Vagina (tissue), 2 donors: ENCODE measurements at regions of chr2 and their contacts with region 1.

Region 1: GRCh38 chr2:11129598-11130449 is 25.4 kb upstream of the SLC66A3 start:
- DNase-seq: no peak
- H3K4me3 ChIP-seq: peak overlapping the region; percentile 37 to 43
- H3K27ac ChIP-seq: no peak overlapping the region
- H3K4me1 ChIP-seq: peaks cover 35% of the 10 kb centered on the region
- H3K27me3 ChIP-seq: no peaks in the 10 kb centered on the region
- CTCF ChIP-seq: peak in 1 of 3 experiments; percentile 3
- POLR2A ChIP-seq: no peak

Region 2: GRCh38 chr2:11446733-11447248 is 317.0 kb after region 1 on chr2:
- intact Hi-C with region 1: loop called (anchors 1 kb)
- DNase-seq: no peak
- H3K4me3 ChIP-seq: no peak overlapping the region
- H3K27ac ChIP-seq: no peak overlapping the region
- H3K4me1 ChIP-seq: no peaks in the 10 kb centered on the region
- H3K27me3 ChIP-seq: no peaks in the 10 kb centered on the region
- CTCF ChIP-seq: peak; percentile 12 to 70 (median 52)
- POLR2A ChIP-seq: no peak

Region 3: DNA sequence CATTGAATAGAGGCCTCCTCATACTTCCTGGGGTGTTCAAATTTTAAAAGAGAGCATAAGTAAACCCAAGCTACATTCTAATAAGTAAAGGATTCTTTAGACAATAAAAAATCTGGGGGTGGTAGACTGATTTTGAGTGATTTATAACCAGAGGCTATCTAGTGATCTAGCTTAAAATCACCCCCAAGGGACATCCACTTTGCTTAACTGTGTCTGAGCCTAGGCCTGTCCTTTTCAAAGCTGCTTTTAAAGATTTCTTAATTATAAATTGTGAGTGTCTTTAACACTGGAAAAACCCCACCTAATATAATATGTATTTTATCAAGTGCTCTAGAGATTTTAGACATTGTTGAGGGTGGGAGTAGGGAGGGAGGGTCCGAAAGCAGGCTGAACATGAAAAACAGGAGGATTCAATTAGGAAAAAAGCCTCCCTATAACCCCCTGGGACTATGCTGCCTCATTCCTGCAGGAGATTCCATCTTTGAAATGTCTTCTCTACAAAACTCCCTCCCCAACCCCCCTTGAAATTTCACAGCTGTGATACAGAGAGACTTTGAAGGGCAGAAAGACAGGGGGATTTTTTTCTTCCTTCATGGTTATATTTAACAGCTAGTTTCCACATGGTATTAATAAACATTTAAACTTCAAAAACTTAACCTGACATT is 1644.4 kb after region 1 on chr2:
- intact Hi-C with region 1: no loop called
- DNase-seq: no peak
- H3K4me3 ChIP-seq: no peak overlapping the region
- H3K27ac ChIP-seq: no peak overlapping the region
- H3K4me1 ChIP-seq: no peaks in the 10 kb centered on the region
- H3K27me3 ChIP-seq: no peaks in the 10 kb centered on the region
- CTCF ChIP-seq: no peak
- POLR2A ChIP-seq: no peak